Activated T-helper 2 cell treated with anti-CD3 and anti-CD28 coated beads, Interferon-gamma antibody, Interleukin-2, Interleukin-4, amounts not matched to agents 10 μg/mL and 5 μg/mL and 100 μg/mL, durations not matched to agents 14 hours and 24 hours and 36 hours (primary cell): ENCODE measurements at regions of chr2 and their contacts with region 1.

Region 1: DNA sequence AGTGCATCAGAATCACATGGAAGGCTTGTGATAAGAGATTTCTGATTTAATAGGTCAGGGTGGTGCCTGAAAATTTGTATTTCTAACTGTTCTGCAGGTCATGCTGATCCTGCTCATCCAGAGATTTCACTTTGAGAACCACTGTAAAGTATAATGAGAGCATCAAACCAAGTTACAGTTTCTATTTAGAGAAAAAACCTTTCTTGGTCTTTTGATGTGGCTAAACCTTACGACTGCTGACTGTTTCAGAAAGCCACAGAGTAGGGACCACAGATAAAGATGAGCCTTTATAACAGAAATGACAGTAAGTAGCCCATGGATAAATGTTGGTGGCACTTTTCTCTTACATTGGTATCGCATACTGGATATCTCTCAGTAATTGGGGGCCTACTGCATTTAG is 109.4 kb upstream of the FANCL start:
- DNase-seq: no peak
- H3K4me3 Mint-ChIP-seq: no peak overlapping the region
- H3K27ac Mint-ChIP-seq: no peak overlapping the region
- H3K4me1 Mint-ChIP-seq: peaks cover 9% of the 10 kb centered on the region
- H3K27me3 Mint-ChIP-seq: peaks cover 55% of the 10 kb centered on the region

Region 2: DNA sequence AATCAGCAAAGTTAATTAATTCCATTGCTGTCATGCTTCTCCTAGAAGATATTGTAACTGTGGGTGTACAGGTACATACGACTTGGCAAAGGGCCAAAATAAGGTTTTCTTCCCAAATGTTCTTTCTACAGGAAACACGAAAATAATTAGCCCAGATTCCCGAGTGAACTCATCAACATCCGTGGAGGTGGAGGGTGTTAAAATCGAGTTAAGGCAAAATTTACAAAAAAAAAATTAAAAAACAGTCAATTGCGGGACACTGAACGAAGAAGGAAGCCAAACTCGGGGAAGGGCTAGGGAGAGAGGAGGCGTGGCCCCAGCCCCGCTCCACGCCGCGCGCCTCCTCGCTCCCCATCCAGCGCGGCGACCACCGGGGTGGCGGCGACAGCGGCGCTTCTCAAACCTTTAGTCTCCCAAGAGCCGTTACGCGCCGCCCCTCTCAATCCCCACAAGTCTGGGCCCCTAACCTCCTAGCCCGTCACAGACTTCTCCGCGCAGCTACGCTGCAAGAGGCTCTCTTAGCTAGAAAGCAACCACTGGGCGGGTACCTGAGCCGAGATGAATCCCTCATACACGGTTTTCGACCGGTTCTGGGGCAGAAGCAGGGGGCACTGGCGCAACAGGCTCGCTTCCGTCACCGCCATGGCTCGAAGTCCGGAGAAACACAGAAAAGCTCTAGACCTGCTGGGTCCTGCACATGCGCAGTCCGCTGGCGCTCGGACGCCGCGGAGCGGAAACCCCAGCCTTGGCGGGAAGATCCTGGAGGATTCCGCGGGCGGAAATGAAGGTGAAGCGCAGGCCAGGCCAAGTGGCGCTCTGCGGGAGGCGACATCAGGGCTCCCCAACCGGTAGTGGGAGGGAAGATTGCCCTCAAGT is 109.6 kb before region 1 on chr2 and contains the start of gene FANCL:
- intact Hi-C with region 1: loop called (anchors 5 kb)
- DNase-seq: peak; percentile 66
- H3K4me3 Mint-ChIP-seq: peak within 1 kb of the TSS; percentile 89
- H3K27ac Mint-ChIP-seq: peak within 1 kb of the TSS; percentile 87
- H3K4me1 Mint-ChIP-seq: peaks cover 26% of the 10 kb centered on the region
- H3K27me3 Mint-ChIP-seq: peaks cover 15% of the 10 kb centered on the region
- total RNA-seq, gene FANCL: 24.0 and 27.6 TPM in 2 replicates

Region 3: GRCh38 chr2:58261215-58261614 is 89.3 kb before region 1 on chr2:
- intact Hi-C with region 1: loop called (anchors 1 kb)
- DNase-seq: no peak
- H3K4me3 Mint-ChIP-seq: no peak overlapping the region
- H3K27ac Mint-ChIP-seq: no peak overlapping the region
- H3K4me1 Mint-ChIP-seq: peaks cover 2% of the 10 kb centered on the region
- H3K27me3 Mint-ChIP-seq: no peaks in the 10 kb centered on the region

Region 4: DNA sequence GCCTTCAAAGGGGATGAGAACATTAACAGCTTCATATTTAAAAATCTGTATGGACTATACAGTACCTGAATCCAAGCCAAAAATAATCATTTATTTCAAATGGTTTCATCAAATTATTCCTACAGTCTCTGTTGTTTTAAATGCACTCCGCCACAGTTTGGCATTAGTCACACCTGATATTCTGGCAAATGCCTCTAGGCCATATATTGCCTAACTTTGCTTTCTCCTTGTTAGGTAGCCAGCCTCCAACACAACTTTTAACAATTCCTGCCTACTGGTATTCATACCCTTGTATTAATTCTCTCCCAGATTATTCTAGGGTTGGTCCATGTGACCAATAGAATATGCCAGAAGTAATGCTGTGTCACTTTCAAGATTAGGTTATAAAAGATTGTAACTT is 37.2 kb after region 1 on chr2:
- intact Hi-C with region 1: no loop called
- DNase-seq: no peak
- H3K4me3 Mint-ChIP-seq: no peak overlapping the region
- H3K27ac Mint-ChIP-seq: no peak overlapping the region
- H3K4me1 Mint-ChIP-seq: no peaks in the 10 kb centered on the region
- H3K27me3 Mint-ChIP-seq: no peaks in the 10 kb centered on the region